Activated CD8-positive, alpha-beta T cell treated with anti-CD3 and anti-CD28 coated beads for 36 hours (primary cell): ENCODE measurements at regions of chr2 and their contacts with region 1.

Region 1: DNA sequence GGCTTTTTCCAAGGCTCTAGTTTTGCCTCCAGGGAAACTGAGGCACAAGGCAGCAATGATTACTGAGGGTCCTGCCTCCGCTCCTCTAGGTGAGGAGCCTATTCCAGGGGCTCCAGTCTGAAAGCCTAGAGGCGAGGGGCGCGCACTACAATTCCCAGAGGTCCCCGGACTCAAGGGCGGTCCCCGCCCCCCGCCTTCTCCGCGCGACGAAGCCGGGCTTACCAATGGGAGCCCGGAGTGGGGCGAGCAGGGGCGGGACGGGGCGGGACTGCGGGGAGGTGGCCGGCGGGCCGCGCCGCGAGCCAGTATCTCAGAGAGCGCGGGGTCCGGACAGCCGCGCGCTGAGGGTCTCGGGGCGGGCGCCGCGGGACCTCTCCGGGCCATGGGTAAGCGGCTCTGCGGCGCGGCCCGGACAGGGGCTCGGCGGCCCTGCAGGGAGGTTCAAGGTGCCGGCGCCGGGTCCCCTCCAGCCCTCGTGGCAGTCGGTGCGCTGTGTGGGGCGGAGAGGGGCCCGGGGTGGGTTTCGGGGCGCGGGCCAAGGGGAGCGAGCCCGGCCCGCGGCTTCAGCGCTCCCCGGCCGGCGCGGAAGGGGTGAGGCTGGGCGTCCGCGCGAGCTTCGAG is at the start of gene ARID5A:
- DNase-seq: peak; percentile 97
- ATAC-seq: peak; percentile 64
- H3K4me3 Mint-ChIP-seq: peak within 1 kb of the TSS; percentile 87
- H3K27ac Mint-ChIP-seq: peak within 1 kb of the TSS; percentile 97
- H3K4me1 Mint-ChIP-seq: peaks cover 54% of the 10 kb centered on the region
- H3K27me3 Mint-ChIP-seq: no peaks in the 10 kb centered on the region
- CTCF ChIP-seq: peak; percentile 81
- total RNA-seq, gene ARID5A: 61.5 to 64.3 TPM

Region 2: DNA sequence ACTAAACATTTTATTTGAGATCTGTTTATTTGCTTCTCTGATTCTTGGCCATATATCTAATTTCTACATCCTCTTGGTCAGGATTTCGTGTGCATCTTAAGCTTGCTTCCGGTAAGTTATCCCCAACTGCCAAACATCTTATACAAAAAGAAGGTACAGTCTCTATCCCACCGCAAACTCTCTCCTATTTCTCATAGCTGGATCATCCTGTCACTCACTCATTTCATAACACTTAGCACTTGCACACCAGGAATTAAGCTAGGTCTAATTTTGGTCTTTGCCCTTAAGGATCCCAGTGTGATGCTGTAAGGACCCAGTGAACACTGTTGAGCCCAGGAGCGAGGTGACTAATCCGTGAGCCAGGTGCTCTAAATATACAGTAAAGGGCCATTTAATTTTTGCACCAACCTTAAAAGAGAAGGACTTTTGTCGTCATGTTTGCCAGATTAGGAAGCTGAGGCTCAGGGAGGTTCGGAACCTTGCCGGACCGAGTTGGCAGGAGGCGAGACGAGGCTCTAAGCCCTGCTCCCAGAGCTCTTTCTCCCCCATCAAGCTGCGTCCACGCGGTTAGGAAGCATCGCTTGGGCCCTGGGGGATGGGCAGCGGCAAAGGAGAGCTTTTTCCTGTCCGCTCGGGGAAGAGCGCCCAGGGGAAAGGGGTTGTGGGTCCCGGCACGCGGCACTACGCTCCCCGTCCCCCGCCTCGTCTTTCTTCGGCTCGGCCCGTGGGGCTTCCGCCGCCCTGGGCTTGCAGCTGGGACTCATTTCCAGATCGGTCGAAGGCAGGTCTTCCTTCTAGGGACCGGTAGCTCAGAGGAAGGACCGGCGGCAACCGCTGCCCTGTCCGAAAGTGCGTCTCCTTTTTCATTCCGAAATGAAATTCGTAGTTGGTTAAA is 215.6 kb before region 1 on chr2:
- CTCF ChIA-PET with region 1: no interaction called
- POLR2A ChIA-PET with region 1: interaction called, 4 read pairs
- intact Hi-C with region 1: loop called (anchors 10 kb)
- DNase-seq: peak; percentile 53
- ATAC-seq: peak; percentile 13
- H3K4me3 Mint-ChIP-seq: peak overlapping the region; percentile 76
- H3K27ac Mint-ChIP-seq: peak overlapping the region; percentile 54
- H3K4me1 Mint-ChIP-seq: peaks cover 53% of the 10 kb centered on the region
- H3K27me3 Mint-ChIP-seq: no peaks in the 10 kb centered on the region
- CTCF ChIP-seq: no peak

Region 3: GRCh38 chr2:96493072-96493471 is 43.5 kb before region 1 on chr2:
- CTCF ChIA-PET with region 1: no interaction called
- POLR2A ChIA-PET with region 1: interaction called, 3 read pairs
- intact Hi-C with region 1: loop called (anchors 5 kb)
- DNase-seq: no peak
- ATAC-seq: no peak
- H3K4me3 Mint-ChIP-seq: no peak overlapping the region
- H3K27ac Mint-ChIP-seq: peak overlapping the region; percentile 20
- H3K4me1 Mint-ChIP-seq: peaks cover 44% of the 10 kb centered on the region
- H3K27me3 Mint-ChIP-seq: no peaks in the 10 kb centered on the region
- CTCF ChIP-seq: no peak

Region 4: DNA sequence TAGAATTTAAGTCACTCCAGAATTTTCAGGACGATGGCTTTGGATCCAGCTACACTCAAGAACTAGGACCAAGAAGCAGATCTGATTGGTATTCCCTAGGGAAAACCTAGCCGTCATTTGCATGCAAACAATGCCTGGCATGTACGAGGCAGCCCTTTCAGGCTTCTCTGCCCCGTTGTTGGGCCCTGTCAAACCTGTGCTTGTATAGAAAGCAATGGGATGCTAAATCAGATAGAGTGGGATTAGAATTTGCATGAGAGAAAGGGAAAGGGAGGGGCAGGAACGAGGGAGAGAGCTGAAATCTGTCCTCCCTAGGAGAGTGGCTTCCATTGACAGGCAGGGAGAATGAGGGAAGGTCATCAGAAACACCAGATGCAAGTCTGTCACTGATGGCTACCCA is 28.6 kb after region 1 on chr2:
- CTCF ChIA-PET with region 1: no interaction called
- POLR2A ChIA-PET with region 1: no interaction called
- intact Hi-C with region 1: no loop called
- DNase-seq: no peak
- ATAC-seq: no peak
- H3K4me3 Mint-ChIP-seq: no peak overlapping the region
- H3K27ac Mint-ChIP-seq: no peak overlapping the region
- H3K4me1 Mint-ChIP-seq: no peaks in the 10 kb centered on the region
- H3K27me3 Mint-ChIP-seq: no peaks in the 10 kb centered on the region
- CTCF ChIP-seq: no peak

Region 5: DNA sequence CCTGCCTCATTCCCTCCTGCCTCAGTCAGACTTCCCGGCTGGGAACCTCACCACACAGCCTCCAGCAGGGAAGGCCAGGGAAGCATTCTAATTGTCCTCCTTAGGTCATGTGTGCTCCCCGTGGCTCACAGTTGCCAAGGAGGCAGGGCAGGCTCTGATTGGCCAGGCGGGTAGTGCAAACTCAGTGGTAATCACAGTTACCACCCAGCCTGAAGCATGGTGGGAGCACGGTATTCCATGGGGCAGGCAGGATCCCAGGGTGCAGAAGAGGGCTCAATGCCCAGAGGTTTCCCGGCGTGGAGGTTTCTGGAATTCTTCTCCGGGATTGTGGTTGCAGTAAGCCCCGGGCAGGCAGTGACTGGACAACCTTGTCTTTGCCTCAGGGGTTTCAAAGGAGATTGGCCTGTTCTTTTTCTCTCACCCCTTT is 133.1 kb after region 1 on chr2:
- CTCF ChIA-PET with region 1: no interaction called
- POLR2A ChIA-PET with region 1: no interaction called
- intact Hi-C with region 1: no loop called
- DNase-seq: no peak
- ATAC-seq: no peak
- H3K4me3 Mint-ChIP-seq: no peak overlapping the region
- H3K27ac Mint-ChIP-seq: no peak overlapping the region
- H3K4me1 Mint-ChIP-seq: no peaks in the 10 kb centered on the region
- H3K27me3 Mint-ChIP-seq: no peaks in the 10 kb centered on the region
- CTCF ChIP-seq: no peak